Activated naive CD4-positive, alpha-beta T cell treated with anti-CD3 and anti-CD28 coated beads for 36 hours (primary cell): ENCODE measurements at regions of chr9 and their contacts with region 1.

Region 1: DNA sequence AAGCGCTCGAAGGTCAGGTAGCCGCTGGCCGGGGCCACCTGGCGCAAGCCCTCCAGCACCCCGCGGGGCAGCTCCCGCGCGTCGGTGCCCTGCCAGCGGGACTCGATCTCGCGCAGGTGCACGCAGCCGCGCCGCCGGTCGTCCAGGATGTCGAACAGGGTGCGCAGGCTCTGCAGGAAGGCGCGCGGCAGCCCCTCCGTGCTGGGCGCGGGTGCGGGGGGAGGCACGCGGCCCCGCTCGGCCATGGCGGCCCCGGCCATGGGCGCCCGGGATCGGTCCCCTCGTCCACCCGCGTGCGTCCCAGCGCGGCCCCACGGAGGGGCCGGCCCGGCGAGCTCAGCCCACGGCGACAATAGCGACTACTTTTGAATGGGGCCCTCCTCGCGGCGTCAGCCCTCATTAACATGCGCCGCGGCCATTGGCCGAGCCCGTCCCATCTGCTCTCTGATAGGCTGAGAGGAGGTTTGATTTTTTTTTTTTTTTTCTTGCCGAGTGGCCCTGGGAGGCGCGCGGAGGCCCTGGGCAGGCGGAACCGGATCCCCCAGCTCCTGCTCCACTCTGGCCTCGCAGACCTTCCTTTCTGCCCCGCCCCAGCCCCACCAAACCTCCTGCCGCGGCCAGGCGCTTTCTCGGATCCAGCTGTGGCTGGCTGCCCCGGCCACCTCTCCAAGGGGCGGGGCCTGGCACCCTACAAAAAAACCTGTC is at the start of gene SAPCD2:
- DNase-seq: peak; percentile 86
- H3K4me3 Mint-ChIP-seq: peak within 1 kb of the TSS; percentile 56
- H3K27ac Mint-ChIP-seq: peak within 1 kb of the TSS; percentile 40
- H3K4me1 Mint-ChIP-seq: peaks cover 9% of the 10 kb centered on the region
- H3K27me3 Mint-ChIP-seq: peaks cover 3% of the 10 kb centered on the region
- total RNA-seq, gene SAPCD2: 3.8 to 3.9 TPM

Region 2: DNA sequence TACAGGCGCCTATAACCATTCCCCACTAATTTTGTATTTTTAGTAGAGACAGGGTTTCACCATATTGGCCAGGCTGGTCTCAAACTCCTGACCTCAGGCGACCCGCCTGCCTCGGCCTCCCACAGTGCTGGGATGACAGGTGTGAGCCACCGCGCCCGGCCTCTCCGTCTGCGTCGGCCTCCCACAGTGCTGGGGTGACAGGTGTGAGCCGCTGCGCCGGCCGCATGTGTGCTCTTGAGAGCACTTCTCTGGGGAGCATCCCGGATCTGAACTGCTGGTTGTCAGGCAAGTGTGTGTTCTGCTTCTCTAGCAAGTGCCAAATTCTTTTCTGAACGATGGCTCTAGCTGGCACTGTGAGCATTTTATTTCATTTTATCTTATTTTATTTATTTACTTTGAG is 12.8 kb before region 1 on chr9:
- CTCF ChIA-PET with region 1: interaction called, 15 read pairs
- intact Hi-C with region 1: no loop called
- DNase-seq: no peak
- H3K4me3 Mint-ChIP-seq: no peak overlapping the region
- H3K27ac Mint-ChIP-seq: no peak overlapping the region
- H3K4me1 Mint-ChIP-seq: no peaks in the 10 kb centered on the region
- H3K27me3 Mint-ChIP-seq: peaks cover 2% of the 10 kb centered on the region

Region 3: GRCh38 chr9:137086531-137087408 is 16.4 kb after region 1 on chr9 and contains the start of gene MAN1B1:
- CTCF ChIA-PET with region 1: interaction called, 28 read pairs
- intact Hi-C with region 1: loop called (anchors 1 kb)
- DNase-seq: peak; percentile 100
- H3K4me3 Mint-ChIP-seq: peak within 1 kb of the TSS; percentile 89
- H3K27ac Mint-ChIP-seq: peak within 1 kb of the TSS; percentile 89
- H3K4me1 Mint-ChIP-seq: peaks cover 36% of the 10 kb centered on the region
- H3K27me3 Mint-ChIP-seq: no peaks in the 10 kb centered on the region
- total RNA-seq, gene MAN1B1: 18.7 to 18.9 TPM

Region 4: DNA sequence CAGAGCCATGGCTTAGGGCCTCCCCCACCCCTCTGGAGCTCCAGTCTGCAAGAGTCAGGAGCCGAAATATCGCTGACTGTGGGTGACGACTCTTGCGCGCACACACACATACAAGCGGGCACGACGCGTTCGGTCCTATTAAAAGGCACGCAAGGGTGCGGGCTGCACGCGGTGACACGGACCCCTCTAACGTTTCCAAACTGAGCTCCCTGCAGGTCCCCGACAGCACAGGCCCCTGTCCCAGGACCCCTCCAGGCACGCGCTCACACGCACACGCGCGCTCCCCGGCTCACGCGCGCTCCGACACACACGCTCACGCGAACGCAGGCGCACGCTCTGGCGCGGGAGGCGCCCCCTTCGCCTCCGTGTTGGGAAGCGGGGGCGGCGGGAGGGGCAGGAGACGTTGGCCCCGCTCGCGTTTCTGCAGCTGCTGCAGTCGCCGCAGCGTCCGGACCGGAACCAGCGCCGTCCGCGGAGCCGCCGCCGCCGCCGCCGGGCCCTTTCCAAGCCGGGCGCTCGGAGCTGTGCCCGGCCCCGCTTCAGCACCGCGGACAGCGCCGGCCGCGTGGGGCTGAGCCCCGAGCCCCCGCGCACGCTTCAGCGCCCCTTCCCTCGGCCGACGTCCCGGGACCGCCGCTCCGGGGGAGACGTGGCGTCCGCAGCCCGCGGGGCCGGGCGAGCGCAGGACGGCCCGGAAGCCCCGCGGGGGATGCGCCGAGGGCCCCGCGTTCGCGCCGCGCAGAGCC is 68.5 kb after region 1 on chr9 and contains the start of gene GRIN1:
- CTCF ChIA-PET with region 1: no interaction called
- intact Hi-C with region 1: no loop called
- DNase-seq: no peak
- H3K4me3 Mint-ChIP-seq: no peak within 1 kb of the TSS
- H3K27ac Mint-ChIP-seq: no peak within 1 kb of the TSS
- H3K4me1 Mint-ChIP-seq: peaks cover 2% of the 10 kb centered on the region
- H3K27me3 Mint-ChIP-seq: peaks cover 55% of the 10 kb centered on the region
- total RNA-seq, gene GRIN1: 0.35 TPM in 1 of 2 experiments, not detected in the other